MCF 10A (cell line): ENCODE measurements at regions of chr11 and their contacts with region 1.

Region 1: DNA sequence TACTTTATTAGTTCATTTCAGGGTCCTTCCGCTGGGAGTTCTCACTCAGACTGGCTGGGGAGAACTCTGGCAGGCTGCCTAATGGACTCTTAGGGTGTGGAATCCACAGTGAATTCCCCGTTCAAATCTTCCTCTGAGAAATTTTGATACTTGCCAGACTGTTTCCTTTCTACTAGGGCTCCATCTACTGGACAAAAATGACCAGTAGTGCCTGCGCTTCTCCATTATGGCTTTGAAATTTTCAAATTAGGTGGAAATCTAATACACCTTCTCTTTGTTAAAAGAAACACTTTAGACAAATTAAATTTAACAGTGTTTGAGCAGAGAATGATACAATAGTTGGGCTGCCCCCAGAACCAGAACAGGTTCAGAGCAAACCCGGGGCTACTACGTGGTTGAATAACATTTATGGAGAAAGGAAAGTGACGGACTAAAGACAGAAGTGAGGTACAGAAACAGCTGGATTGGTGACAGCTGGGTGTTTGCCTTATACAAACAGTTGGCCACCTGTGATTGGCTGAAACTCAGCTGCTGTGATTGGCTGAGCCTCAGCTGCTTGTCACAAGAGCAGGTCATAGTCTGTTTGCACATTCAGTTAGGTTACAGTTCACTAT is 52.9 kb upstream of the FDX1 start:
- DNase-seq: peak; percentile 84
- H3K4me3 Mint-ChIP-seq: no peak overlapping the region
- H3K27ac Mint-ChIP-seq: peak overlapping the region; percentile 61
- H3K4me1 Mint-ChIP-seq: peaks cover 16% of the 10 kb centered on the region
- H3K27me3 Mint-ChIP-seq: no peaks in the 10 kb centered on the region
- CTCF ChIP-seq: peak; percentile 52

Region 2: DNA sequence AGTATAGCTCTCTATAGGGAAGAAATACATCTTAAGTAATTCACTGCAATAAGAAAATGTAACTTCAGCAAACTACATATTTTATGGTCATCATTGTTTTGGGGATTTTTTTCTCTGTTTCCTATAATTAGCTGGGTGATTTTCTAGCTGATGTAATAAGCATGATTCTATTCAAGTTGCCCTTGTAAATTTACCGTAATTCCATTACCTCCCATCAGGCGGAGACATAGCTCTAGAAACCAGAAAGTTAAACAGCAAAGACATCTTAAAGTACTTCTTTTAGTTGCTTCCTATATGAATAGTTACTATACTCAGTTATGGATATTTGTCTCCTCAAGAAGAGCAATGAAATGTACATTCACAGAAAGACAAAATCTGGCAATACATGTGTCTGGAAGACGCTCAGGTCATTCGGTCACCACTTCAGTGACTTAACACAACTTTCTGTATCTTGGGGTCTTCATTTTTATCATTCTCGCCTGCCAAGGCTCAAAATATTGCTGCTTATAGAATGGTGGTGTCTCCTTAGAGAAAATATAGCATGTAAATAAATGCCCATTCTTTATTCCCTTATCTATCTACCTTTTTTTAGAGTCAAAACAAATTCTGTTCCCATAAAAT is 523.6 kb before region 1 on chr11:
- CTCF ChIA-PET with region 1: no interaction called
- POLR2A ChIA-PET with region 1: interaction called, 3 read pairs
- intact Hi-C with region 1: loop called (anchors 1 kb)
- DNase-seq: peak; percentile 73
- H3K4me3 Mint-ChIP-seq: no peak overlapping the region
- H3K27ac Mint-ChIP-seq: no peak overlapping the region
- H3K4me1 Mint-ChIP-seq: peaks cover 8% of the 10 kb centered on the region
- H3K27me3 Mint-ChIP-seq: no peaks in the 10 kb centered on the region
- CTCF ChIP-seq: peak; percentile 63

Region 3: DNA sequence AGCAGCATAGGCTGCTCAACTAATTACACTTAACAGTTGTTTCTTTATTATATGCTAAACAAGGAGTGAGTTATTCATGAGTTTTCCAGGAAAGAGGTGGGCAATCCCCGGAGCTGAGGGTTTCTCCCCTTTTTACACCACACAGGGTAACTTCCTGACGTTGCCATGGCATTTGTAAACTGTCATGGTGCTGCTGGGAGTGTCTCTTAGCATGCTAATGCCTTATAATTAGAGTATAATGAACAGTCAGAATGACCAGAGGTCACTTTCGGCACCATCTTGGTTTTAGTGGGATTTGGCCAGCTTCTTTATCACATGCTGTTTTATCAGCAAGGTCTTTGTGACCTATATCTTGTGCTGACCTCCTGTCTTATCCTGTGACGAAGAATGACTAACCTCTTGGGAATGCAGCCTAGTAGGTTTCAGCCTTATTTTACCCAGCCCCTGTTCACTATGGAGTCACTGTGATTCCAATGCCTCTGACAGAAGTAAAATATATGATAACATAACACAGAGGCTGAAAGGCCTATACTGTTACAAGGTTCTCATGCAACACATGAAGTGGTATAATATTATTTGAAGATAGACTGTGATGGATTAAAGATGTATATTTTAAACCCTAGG is 39.1 kb before region 1 on chr11:
- CTCF ChIA-PET with region 1: no interaction called
- POLR2A ChIA-PET with region 1: no interaction called
- intact Hi-C with region 1: no loop called
- DNase-seq: peak; percentile 11
- H3K4me3 Mint-ChIP-seq: no peak overlapping the region
- H3K27ac Mint-ChIP-seq: no peak overlapping the region
- H3K4me1 Mint-ChIP-seq: no peaks in the 10 kb centered on the region
- H3K27me3 Mint-ChIP-seq: no peaks in the 10 kb centered on the region
- CTCF ChIP-seq: no peak

Region 4: DNA sequence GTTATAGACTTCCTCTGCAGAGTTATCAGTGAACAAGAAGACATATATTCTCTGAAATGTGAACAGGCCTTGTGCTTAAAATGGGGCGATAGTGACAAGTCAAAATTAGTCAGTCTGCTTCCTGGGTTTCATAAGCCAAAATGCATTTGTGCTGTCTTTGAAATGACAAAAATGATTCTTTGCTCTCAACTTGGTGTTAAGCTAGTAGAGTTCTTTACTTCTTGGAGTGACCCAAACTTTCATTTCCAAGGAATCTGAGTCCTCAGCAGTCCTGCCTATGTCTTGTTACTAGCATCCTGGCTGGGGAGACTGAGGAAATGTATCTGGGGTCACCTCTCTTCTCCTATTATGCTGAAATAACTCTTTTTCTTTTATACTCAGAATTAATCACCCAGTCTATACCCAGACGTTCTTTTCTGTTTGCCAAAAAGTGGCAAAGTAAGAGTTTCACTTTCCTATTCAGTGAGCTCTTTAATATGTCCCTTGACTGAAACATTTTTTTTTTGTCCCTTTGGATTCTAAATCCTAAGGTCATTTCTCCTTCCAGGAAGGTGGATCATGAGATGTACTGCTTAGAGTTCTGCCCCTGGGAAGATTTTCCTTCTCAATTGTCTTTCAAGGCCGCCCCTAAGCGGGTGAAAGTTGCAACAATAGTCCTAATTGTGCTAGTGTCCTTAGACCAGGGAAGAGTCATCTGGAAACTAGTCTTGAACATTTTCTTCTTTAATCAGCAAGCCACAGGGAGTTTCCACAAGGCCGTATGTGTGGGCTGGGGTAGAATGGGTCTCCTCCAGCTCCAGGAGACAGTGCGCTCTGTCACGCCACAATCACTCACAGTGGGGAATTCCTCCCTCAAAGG is 27.5 kb before region 1 on chr11:
- CTCF ChIA-PET with region 1: no interaction called
- POLR2A ChIA-PET with region 1: no interaction called
- intact Hi-C with region 1: no loop called
- DNase-seq: no peak
- H3K4me3 Mint-ChIP-seq: no peak overlapping the region
- H3K27ac Mint-ChIP-seq: no peak overlapping the region
- H3K4me1 Mint-ChIP-seq: no peaks in the 10 kb centered on the region
- H3K27me3 Mint-ChIP-seq: no peaks in the 10 kb centered on the region
- CTCF ChIP-seq: no peak

Region 5: DNA sequence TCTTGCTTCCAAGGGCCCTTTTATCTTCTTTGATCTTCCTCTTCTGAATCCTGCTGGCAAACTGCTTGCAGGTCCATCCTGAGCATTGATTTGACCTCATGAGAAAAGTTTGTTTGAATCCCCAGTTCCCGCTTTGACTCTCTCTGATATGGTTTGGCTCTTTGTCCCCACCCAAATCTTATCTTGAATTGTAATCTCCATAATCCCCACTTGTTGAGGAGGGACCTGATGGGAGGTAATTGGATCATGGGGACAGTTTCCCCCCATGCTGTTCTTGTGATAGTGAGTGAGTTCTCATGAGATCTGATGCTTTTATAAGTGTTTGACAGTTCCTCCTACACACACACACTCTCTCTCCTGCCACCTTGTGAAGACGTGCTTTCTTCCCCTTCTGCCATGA is 462.0 kb after region 1 on chr11:
- CTCF ChIA-PET with region 1: no interaction called
- POLR2A ChIA-PET with region 1: no interaction called
- intact Hi-C with region 1: no loop called
- DNase-seq: no peak
- H3K4me3 Mint-ChIP-seq: no peak overlapping the region
- H3K27ac Mint-ChIP-seq: no peak overlapping the region
- H3K4me1 Mint-ChIP-seq: no peaks in the 10 kb centered on the region
- H3K27me3 Mint-ChIP-seq: peaks cover 28% of the 10 kb centered on the region
- CTCF ChIP-seq: no peak